K562 (cell line): ENCODE measurements at regions of chr6 and their contacts with region 1.

Region 1: DNA sequence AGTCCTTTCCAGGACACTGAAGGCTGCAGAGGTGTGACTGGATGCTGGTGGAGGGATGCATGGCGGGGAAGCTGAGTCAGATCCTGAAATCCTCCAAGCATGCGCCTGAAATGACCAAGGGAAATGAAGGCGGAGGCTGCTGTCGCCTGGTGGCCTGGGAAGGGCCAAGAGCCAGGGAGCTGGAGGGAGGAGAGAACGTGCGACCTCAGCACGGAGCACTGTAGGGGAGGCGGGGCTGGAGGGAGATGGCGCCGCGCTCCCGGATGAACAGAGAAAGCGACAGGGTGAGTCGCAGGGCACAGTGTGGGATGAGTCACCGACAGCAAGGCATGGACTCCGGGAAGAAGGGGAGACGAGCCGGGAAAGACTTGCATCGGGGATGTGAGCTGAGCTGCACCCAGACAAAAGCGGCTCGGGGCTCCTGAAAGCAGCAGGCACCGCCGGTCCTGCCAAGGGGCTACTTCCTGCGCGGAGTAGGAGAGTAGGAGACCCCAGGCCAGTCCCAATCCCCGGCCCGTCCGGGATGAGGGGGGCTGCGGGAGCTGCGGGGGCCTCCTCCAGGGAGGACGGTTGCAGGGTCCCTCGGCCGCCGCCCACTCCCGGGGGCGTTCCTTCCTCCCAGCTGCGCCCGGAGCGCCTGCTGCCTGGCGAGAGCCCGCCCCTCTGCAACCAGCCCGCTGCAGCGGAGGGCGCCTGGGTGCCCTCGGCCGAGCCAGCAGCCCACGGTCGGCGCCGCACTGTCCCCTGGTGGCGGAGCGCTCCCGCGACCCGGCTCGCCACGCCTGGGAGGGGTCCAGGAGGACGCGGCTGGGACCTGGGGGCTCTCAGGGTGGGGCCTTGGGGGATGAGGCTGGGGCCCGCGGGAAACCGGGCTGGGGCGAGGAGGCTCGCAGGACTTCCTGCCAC is 11.0 kb upstream of the NQO2 start:
- DNase-seq: peak; percentile 84 to 96 (median 84)
- ATAC-seq: peak; percentile 84
- H3K4me3 ChIP-seq: peak overlapping the region; percentile 71
- H3K27ac ChIP-seq: peak overlapping the region; percentile 99
- H3K4me1 ChIP-seq: peaks cover 56% of the 10 kb centered on the region in 2 experiments
- H3K27me3 ChIP-seq: no peaks in the 10 kb centered on the region
- CTCF ChIP-seq: peak; percentile 81 to 98 (median 94)
- EP300 ChIP-seq: peak; percentile 26; the same call in 1 of the 2 replicates
- POLR2A ChIP-seq: peak; percentile 80
- RAD21 ChIP-seq: peak; percentile 93 to 98

Region 2: GRCh38 chr6:2791124-2791974 is 197.3 kb before region 1 on chr6:
- CTCF ChIA-PET with region 1: interaction called, 21 read pairs
- POLR2A ChIA-PET with region 1: interaction called, 4 read pairs
- in situ Hi-C with region 1: no loop called
- intact Hi-C with region 1: loop called (anchors 1 kb)
- DNase-seq: peak; percentile 74 to 88 (median 81)
- ATAC-seq: peak; percentile 97
- H3K4me3 ChIP-seq: no peak overlapping the region
- H3K27ac ChIP-seq: no peak overlapping the region
- H3K4me1 ChIP-seq: peaks cover 2 to 3% of the 10 kb centered on the region in 2 experiments; a peak in 3 of 5 replicates
- H3K27me3 ChIP-seq: no peaks in the 10 kb centered on the region
- CTCF ChIP-seq: peak; percentile 89 to 98 (median 97)
- EP300 ChIP-seq: no peak
- POLR2A ChIP-seq: no peak
- RAD21 ChIP-seq: peak; percentile 97 to 99

Region 3: GRCh38 chr6:2857580-2858337 is 130.9 kb before region 1 on chr6:
- CTCF ChIA-PET with region 1: no interaction called
- POLR2A ChIA-PET with region 1: interaction called, 10 read pairs
- in situ Hi-C with region 1: loop called (anchors 5 kb)
- intact Hi-C with region 1: no loop called
- DNase-seq: peak; percentile 79 to 96 (median 86)
- ATAC-seq: peak; percentile 86
- H3K4me3 ChIP-seq: peak overlapping the region; percentile 22
- H3K27ac ChIP-seq: peak overlapping the region; percentile 98
- H3K4me1 ChIP-seq: peaks cover 48 to 67% of the 10 kb centered on the region in 2 experiments
- H3K27me3 ChIP-seq: no peaks in the 10 kb centered on the region
- CTCF ChIP-seq: 0 out of 6 replicates have a peak, but pooled peaks of 1 of the 3 experiments have one; percentile 8
- EP300 ChIP-seq: peak; percentile 87
- POLR2A ChIP-seq: peak; percentile 78
- RAD21 ChIP-seq: no peak; a peak in 1 of 4 replicates

Region 4: DNA sequence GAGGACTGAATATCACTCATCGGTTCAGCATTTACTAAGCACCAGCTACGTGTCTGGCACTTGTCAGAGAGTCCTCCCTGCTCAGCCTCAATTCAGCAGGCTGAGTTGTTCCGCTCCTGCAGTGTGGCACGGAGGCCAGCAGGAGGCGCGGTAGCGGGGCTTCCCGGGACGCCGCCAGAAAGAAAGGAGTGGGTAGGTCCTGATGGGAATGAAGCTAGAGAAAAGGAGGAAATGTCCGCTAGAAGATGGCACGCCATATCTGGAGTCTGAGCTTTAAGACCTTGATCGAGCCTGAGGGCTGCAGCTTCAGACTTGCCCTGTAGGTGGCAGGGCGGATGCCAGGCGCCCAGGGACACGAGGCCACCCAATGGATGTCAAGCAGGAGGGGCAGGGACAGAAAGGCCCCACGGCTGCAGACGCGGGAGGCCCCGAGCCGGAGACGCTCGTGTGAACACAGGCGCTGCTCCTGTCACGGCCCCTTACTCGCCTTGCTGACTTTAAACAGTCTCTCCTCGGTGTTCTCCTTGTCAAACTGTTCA is 36.1 kb before region 1 on chr6:
- CTCF ChIA-PET with region 1: interaction called, 39 read pairs
- POLR2A ChIA-PET with region 1: interaction called, 7 read pairs
- in situ Hi-C with region 1: no loop called
- intact Hi-C with region 1: loop called (anchors 1 kb)
- DNase-seq: peak; percentile 74 to 80 (median 78)
- ATAC-seq: peak; percentile 89
- H3K4me3 ChIP-seq: no peak overlapping the region
- H3K27ac ChIP-seq: peak overlapping the region; percentile 17; the same call in 1 of the 3 replicates
- H3K4me1 ChIP-seq: peaks cover 25 to 26% of the 10 kb centered on the region in 2 experiments
- H3K27me3 ChIP-seq: no peaks in the 10 kb centered on the region
- CTCF ChIP-seq: peak; percentile 98 to 100 (median 99)
- EP300 ChIP-seq: no peak
- POLR2A ChIP-seq: no peak
- RAD21 ChIP-seq: peak; percentile 90 to 96

Region 5: GRCh38 chr6:2976571-2977085 is 12.1 kb before region 1 on chr6:
- CTCF ChIA-PET with region 1: interaction called, 3 read pairs
- POLR2A ChIA-PET with region 1: interaction called, 31 read pairs
- in situ Hi-C with region 1: no loop called
- intact Hi-C with region 1: no loop called
- DNase-seq: no peak
- ATAC-seq: no peak
- H3K4me3 ChIP-seq: no peak overlapping the region
- H3K27ac ChIP-seq: peak overlapping the region; percentile 14; the same call in 2 of the 3 replicates
- H3K4me1 ChIP-seq: peaks cover 16 to 62% of the 10 kb centered on the region in 2 experiments
- H3K27me3 ChIP-seq: no peaks in the 10 kb centered on the region
- CTCF ChIP-seq: no peak
- EP300 ChIP-seq: no peak
- POLR2A ChIP-seq: no peak
- RAD21 ChIP-seq: no peak

Region 6: GRCh38 chr6:3068329-3069214 is 79.9 kb after region 1 on chr6 and contains the start of gene RIPK1:
- CTCF ChIA-PET with region 1: no interaction called
- POLR2A ChIA-PET with region 1: interaction called, 17 read pairs
- in situ Hi-C with region 1: no loop called
- intact Hi-C with region 1: no loop called
- DNase-seq: peak; percentile 96 to 98 (median 96)
- ATAC-seq: peak; percentile 85
- H3K4me3 ChIP-seq: peak within 1 kb of the TSS; percentile 84
- H3K27ac ChIP-seq: peak within 1 kb of the TSS; percentile 97
- H3K4me1 ChIP-seq: peaks cover 19 to 30% of the 10 kb centered on the region in 2 experiments
- H3K27me3 ChIP-seq: no peaks in the 10 kb centered on the region
- CTCF ChIP-seq: peak; percentile 57 to 68 (median 59); a peak in 5 of 6 replicates
- EP300 ChIP-seq: peak; percentile 51
- POLR2A ChIP-seq: peak; percentile 95
- RAD21 ChIP-seq: peak in 1 of 2 experiments; percentile 34; a peak in 3 of 4 replicates
- polyA plus RNA-seq, gene RIPK1: 3.8 to 4.5 TPM

Region 7: GRCh38 chr6:3258720-3259490 is 270.2 kb after region 1 on chr6 and contains the start of gene PSMG4:
- CTCF ChIA-PET with region 1: no interaction called
- POLR2A ChIA-PET with region 1: no interaction called
- in situ Hi-C with region 1: loop called (anchors 10 kb)
- intact Hi-C with region 1: loop called (anchors 10 kb)
- DNase-seq: peak; percentile 95 to 100 (median 100)
- ATAC-seq: peak; percentile 96
- H3K4me3 ChIP-seq: peak within 1 kb of the TSS; percentile 94
- H3K27ac ChIP-seq: peak within 1 kb of the TSS; percentile 87
- H3K4me1 ChIP-seq: peaks cover 35 to 36% of the 10 kb centered on the region in 2 experiments
- H3K27me3 ChIP-seq: no peaks in the 10 kb centered on the region
- CTCF ChIP-seq: no peak; a peak in 1 of 6 replicates
- EP300 ChIP-seq: 0 out of 2 replicates have a peak, but pooled peaks have one; percentile 29
- POLR2A ChIP-seq: peak; percentile 86
- RAD21 ChIP-seq: peak in 1 of 2 experiments; percentile 13; a peak in 2 of 4 replicates
- polyA plus RNA-seq, gene PSMG4: 12.9 to 19.4 TPM

Region 8: DNA sequence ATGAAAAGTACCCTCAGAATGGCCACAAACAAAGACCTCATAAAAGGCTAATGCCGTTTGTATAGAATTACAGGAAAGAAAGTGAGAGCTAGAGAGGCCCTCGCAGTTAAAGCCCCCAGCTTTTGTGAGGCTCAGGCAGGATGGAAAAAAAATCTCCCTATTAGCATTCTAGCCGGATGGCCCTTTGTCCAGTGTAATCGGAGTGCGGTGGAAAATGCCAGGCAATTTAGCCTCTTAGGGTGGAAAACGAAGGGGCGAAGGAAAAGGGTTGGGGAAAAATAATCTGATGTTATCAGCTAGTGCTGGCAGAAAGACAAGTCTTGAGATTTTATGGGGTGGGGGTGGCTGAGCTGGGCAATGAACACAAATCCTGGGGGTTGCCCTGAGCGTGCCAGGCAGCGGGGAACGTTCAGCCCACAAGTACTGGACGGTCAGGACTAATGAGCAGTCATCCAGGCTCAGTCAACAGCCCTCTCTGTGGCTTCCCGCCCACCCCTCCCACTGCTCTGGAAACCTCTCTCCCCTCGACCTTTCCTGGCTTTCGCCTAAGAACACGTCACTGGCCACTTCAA is 362.5 kb after region 1 on chr6:
- CTCF ChIA-PET with region 1: no interaction called
- POLR2A ChIA-PET with region 1: no interaction called
- in situ Hi-C with region 1: no loop called
- intact Hi-C with region 1: no loop called
- DNase-seq: peak in 3 of 4 experiments; percentile 34 to 59 (median 46)
- ATAC-seq: no peak
- H3K4me3 ChIP-seq: no peak overlapping the region
- H3K27ac ChIP-seq: no peak overlapping the region
- H3K4me1 ChIP-seq: peaks cover 54 to 83% of the 10 kb centered on the region in 2 experiments
- H3K27me3 ChIP-seq: no peaks in the 10 kb centered on the region
- CTCF ChIP-seq: no peak
- EP300 ChIP-seq: no peak
- POLR2A ChIP-seq: no peak
- RAD21 ChIP-seq: no peak

Region 9: DNA sequence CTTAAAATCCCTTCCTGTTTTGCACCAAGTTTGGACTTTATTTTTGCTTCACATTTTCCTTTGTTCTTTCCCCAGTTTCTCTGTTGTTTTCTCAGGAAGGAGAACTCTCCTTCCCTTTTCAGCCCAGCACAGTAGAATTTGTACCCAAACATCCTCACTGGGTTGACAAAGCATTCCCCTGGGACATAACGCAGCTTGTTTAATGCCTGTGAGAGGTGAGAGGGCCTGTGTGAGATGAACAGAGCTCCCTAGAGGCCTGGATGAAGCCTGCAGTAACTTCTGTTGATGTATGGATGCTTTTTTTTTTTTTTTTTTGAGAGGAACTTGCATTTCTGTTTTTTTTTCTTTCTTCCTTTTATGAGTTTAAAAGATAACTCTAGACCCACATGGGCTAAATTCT is 573.0 kb after region 1 on chr6:
- CTCF ChIA-PET with region 1: no interaction called
- POLR2A ChIA-PET with region 1: no interaction called
- in situ Hi-C with region 1: no loop called
- intact Hi-C with region 1: no loop called
- DNase-seq: no peak
- ATAC-seq: peak; percentile 70
- H3K4me3 ChIP-seq: no peak overlapping the region
- H3K27ac ChIP-seq: no peak overlapping the region
- H3K4me1 ChIP-seq: no peaks in the 10 kb centered on the region
- H3K27me3 ChIP-seq: peaks cover 10 to 35% of the 10 kb centered on the region in 2 experiments; a peak in 4 of 5 replicates
- CTCF ChIP-seq: 0 out of 6 replicates have a peak, but pooled peaks of 1 of the 3 experiments have one; percentile 10
- EP300 ChIP-seq: no peak
- POLR2A ChIP-seq: no peak
- RAD21 ChIP-seq: no peak

Region 10: DNA sequence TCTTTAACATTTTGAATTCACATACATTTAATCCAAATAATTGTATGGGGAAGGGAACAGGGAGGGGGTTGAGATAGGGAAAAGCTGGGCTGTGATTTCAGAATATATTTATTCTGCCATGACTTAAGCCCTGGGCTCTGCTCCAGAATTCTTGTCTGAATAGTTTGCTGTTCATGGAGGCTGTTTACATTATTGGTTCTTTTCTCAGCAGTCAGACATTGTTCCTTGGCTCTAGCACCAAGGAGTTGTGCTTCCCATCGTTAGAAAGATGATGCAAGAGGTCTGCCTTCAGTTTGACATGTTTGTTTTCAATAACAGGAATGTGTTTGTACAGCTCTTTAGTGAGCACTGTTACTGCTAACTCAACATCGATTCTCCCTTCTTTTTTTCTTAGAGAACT is 1588.7 kb after region 1 on chr6:
- CTCF ChIA-PET with region 1: no interaction called
- POLR2A ChIA-PET with region 1: no interaction called
- in situ Hi-C with region 1: no loop called
- intact Hi-C with region 1: no loop called
- DNase-seq: no peak
- ATAC-seq: no peak
- H3K4me3 ChIP-seq: no peak overlapping the region
- H3K27ac ChIP-seq: no peak overlapping the region
- H3K4me1 ChIP-seq: no peaks in the 10 kb centered on the region
- H3K27me3 ChIP-seq: peaks cover 0 to 20% of the 10 kb centered on the region in 2 experiments; a peak in 2 of 5 replicates
- CTCF ChIP-seq: no peak
- EP300 ChIP-seq: no peak
- POLR2A ChIP-seq: no peak
- RAD21 ChIP-seq: no peak